ENCODE measurements at regions of chr2 and their contacts with region 1.

Region 1: GRCh38 chr2:29747786-29748494 is 173.4 kb downstream of the ALK start:
- DNase-seq: peak; percentile 100
- H3K4me3 ChIP-seq: no peak overlapping the region
- H3K27ac ChIP-seq: peak overlapping the region; percentile 71
- H3K4me1 ChIP-seq: peaks cover 22% of the 10 kb centered on the region
- H3K27me3 ChIP-seq: no peaks in the 10 kb centered on the region
- CTCF ChIP-seq: no peak

Region 2: DNA sequence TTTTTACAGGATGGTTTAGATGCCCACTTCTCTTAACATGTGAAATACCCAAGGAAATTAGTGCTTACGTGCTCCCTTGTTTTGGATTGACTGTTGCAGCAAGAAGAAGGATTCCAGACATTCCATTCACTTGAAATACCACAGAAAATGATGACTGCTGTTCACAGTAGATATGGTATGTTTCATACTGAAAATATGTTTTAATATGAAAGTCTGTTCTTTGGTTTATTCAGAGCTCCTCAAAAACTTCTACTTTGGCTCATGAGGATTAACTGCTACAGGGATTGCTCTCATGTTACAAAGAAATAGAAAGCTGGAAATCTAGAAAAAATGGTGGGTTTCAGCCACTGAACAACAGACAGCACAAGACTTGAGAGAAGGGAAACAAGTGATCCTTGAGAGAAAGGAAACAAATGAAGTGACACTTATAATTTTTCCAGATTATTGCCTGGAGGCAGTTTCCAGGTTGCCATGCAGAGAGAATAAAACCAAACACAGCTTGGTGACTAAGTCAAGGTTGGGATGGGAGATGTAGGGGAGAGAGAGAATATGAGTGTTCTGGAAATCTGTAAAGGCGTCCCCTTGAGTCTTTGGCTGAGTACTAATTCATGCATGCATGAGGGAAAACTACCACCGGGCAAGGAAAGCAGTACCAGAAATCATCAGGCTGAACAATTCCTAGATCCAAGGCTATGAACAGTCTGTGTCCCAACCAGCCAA is 284.6 kb before region 1 on chr2:
- CTCF ChIA-PET with region 1: no interaction called
- dilution Hi-C with region 1: no loop called
- in situ Hi-C with region 1: no loop called
- intact Hi-C with region 1: loop called (anchors 5 kb)
- DNase-seq: peak; percentile 60
- H3K4me3 ChIP-seq: no peak overlapping the region
- H3K27ac ChIP-seq: peak overlapping the region; percentile 72
- H3K4me1 ChIP-seq: peaks cover 19% of the 10 kb centered on the region
- H3K27me3 ChIP-seq: no peaks in the 10 kb centered on the region
- CTCF ChIP-seq: no peak

Region 3: GRCh38 chr2:29663268-29663667 is 84.7 kb before region 1 on chr2:
- CTCF ChIA-PET with region 1: no interaction called
- dilution Hi-C with region 1: no loop called
- in situ Hi-C with region 1: no loop called
- intact Hi-C with region 1: loop called (anchors 5 kb)
- DNase-seq: peak; percentile 73
- H3K4me3 ChIP-seq: no peak overlapping the region
- H3K27ac ChIP-seq: peak overlapping the region; percentile 60
- H3K4me1 ChIP-seq: peaks cover 20% of the 10 kb centered on the region
- H3K27me3 ChIP-seq: no peaks in the 10 kb centered on the region
- CTCF ChIP-seq: no peak

Region 4: DNA sequence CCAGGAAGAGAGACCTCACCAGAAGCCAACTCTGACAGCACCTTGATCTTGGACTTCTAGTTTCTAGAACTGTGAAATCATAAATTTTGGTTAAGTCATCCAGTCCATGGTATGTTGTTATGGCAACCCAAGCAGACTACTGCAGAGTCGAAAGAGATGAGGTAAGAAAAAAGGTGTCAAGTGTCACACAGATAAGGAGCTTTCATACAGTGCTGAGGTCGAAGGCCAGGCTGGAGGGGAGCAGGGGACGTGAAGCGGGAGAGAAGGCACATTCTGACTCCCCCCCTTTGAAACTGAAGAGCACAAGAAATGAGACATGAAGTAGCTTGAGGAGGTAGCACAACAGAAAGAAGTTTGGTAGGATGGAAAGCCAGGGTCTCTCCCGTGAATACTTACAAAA is 63.0 kb after region 1 on chr2:
- CTCF ChIA-PET with region 1: no interaction called
- dilution Hi-C with region 1: no loop called
- in situ Hi-C with region 1: no loop called
- intact Hi-C with region 1: loop called (anchors 1 kb)
- DNase-seq: peak; percentile 8
- H3K4me3 ChIP-seq: no peak overlapping the region
- H3K27ac ChIP-seq: no peak overlapping the region
- H3K4me1 ChIP-seq: peaks cover 13% of the 10 kb centered on the region
- H3K27me3 ChIP-seq: no peaks in the 10 kb centered on the region
- CTCF ChIP-seq: no peak

Measured in mammary epithelial cell (primary cell).